HepG2 (cell line): ENCODE measurements at regions of chr1 and their contacts with region 1.

Region 1: GRCh38 chr1:66929999-66930822 is 5.4 kb downstream of the MIER1 start:
- DNase-seq: peak; percentile 86
- ATAC-seq: peak; percentile 84
- H3K4me3 ChIP-seq: peak overlapping the region; percentile 93 to 98 (median 94)
- H3K27ac ChIP-seq: peak overlapping the region; percentile 94
- H3K4me1 ChIP-seq: peaks cover 56% of the 10 kb centered on the region
- H3K27me3 ChIP-seq: no peaks in the 10 kb centered on the region; a peak in 1 of 5 replicates
- CTCF ChIP-seq: peak; percentile 55; the same call in 1 of the 2 replicates
- EP300 ChIP-seq: peak in 1 of 2 experiments; percentile 24; a peak in 1 of 4 replicates
- POLR2A ChIP-seq: peak; percentile 51 to 57
- RAD21 ChIP-seq: peak; percentile 47

Region 2: GRCh38 chr1:66809736-66810326 is 120.4 kb before region 1 on chr1:
- CTCF ChIA-PET with region 1: no interaction called
- POLR2A ChIA-PET with region 1: no interaction called
- in situ Hi-C with region 1: no loop called
- intact Hi-C with region 1: no loop called
- DNase-seq: no peak
- ATAC-seq: no peak
- H3K4me3 ChIP-seq: no peak overlapping the region
- H3K27ac ChIP-seq: no peak overlapping the region
- H3K4me1 ChIP-seq: no peaks in the 10 kb centered on the region
- H3K27me3 ChIP-seq: no peaks in the 10 kb centered on the region
- CTCF ChIP-seq: no peak
- EP300 ChIP-seq: no peak
- POLR2A ChIP-seq: no peak
- RAD21 ChIP-seq: no peak

Region 3: DNA sequence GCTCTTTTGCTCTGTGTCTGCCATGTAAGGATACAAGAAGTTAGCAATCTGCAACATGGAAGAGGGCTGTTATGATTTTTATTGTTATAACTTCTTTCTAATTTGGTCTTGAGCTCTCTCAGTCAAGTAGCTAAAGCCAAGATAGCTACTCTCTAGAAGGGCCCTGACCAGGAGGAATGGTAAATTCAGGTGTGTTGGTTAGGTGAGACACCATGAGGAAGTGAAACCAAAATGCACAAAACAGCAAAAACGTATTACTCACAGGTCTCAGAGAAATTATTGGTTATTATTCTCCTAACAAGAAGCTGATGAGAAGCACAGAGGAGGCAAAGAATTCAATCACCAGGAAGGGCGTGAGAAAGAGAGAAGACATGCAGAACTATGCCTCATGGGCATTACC is 77.3 kb before region 1 on chr1:
- CTCF ChIA-PET with region 1: no interaction called
- POLR2A ChIA-PET with region 1: no interaction called
- in situ Hi-C with region 1: no loop called
- intact Hi-C with region 1: no loop called
- DNase-seq: no peak
- ATAC-seq: no peak
- H3K4me3 ChIP-seq: no peak overlapping the region
- H3K27ac ChIP-seq: no peak overlapping the region
- H3K4me1 ChIP-seq: no peaks in the 10 kb centered on the region
- H3K27me3 ChIP-seq: no peaks in the 10 kb centered on the region
- CTCF ChIP-seq: no peak
- EP300 ChIP-seq: no peak
- POLR2A ChIP-seq: no peak
- RAD21 ChIP-seq: no peak

Region 4: DNA sequence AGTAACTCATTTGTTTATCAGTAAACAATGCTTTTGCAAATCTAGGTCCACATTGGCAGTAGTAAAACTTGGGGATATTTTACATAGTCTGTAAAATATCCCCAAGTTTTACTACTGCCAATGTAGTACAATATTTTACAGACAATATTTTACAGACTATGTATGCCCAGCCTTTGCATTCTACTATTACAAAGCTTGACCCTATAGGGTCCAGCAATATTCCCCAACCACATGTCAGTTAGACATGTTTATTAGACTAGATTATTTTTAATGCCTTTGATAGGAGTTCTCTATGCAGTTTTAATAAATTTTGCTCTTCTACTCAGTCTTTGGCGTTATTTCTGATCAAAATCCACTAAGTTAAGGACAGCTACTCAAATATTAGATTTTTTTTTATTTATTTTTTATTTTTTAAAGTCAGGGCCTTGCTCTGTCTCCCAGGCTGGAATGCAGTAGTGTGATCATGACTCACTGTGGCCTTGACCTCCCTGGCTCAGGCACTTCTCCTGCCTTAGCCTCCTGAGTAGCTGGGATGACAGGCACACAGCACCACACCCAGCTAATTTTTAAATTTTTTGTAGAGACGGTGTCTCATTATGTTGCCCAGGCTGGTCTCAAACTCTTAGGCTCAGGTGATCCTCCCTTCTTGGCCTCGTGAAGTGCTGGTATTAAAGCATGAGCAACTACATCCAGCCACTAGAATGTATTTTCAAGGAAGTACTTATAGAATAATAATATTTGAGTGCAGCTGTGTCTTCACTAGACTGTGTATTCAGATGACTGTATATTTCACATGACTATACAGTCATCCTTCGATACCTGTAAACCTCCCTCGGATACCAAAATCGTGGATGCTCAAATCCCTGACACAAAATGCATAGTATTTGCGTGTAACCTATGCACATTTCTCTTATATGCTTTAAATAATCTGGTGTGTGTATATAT is 14.4 kb after region 1 on chr1:
- CTCF ChIA-PET with region 1: no interaction called
- POLR2A ChIA-PET with region 1: interaction called, 19 read pairs
- in situ Hi-C with region 1: no loop called
- intact Hi-C with region 1: loop called (anchors 2 kb)
- DNase-seq: peak; percentile 79
- ATAC-seq: peak; percentile 95
- H3K4me3 ChIP-seq: no peak overlapping the region
- H3K27ac ChIP-seq: peak overlapping the region; percentile 59
- H3K4me1 ChIP-seq: peaks cover 47% of the 10 kb centered on the region
- H3K27me3 ChIP-seq: no peaks in the 10 kb centered on the region
- CTCF ChIP-seq: no peak
- EP300 ChIP-seq: peak in 1 of 2 experiments; percentile 31; a peak in 1 of 4 replicates
- POLR2A ChIP-seq: no peak
- RAD21 ChIP-seq: no peak

Region 5: GRCh38 chr1:67053785-67054772 is 123.9 kb after region 1 on chr1 and contains the start of gene SLC35D1:
- CTCF ChIA-PET with region 1: no interaction called
- POLR2A ChIA-PET with region 1: interaction called, 20 read pairs
- in situ Hi-C with region 1: loop called (anchors 5 kb)
- intact Hi-C with region 1: loop called (anchors 2 kb)
- DNase-seq: peak; percentile 86
- ATAC-seq: peak; percentile 90
- H3K4me3 ChIP-seq: peak within 1 kb of the TSS; percentile 85 to 96 (median 88)
- H3K27ac ChIP-seq: peak within 1 kb of the TSS; percentile 98
- H3K4me1 ChIP-seq: peaks cover 42% of the 10 kb centered on the region
- H3K27me3 ChIP-seq: no peaks in the 10 kb centered on the region; a peak in 1 of 5 replicates
- CTCF ChIP-seq: peak; percentile 40
- EP300 ChIP-seq: peak in 1 of 2 experiments; percentile 61; a peak in 1 of 4 replicates
- POLR2A ChIP-seq: peak; percentile 66 to 76
- RAD21 ChIP-seq: peak; percentile 30; the same call in 1 of the 2 replicates
- total RNA-seq, gene SLC35D1: 30.6 and 41.5 TPM in 2 replicates